Ovary (tissue), 10 donors: ENCODE measurements at regions of chr12 and their contacts with region 1.

Region 1: GRCh38 chr12:131928711-131929580 is at the start of gene PUS1:
- DNase-seq: peak; percentile 93 to 96 (median 94)
- H3K4me3 ChIP-seq: peak within 1 kb of the TSS; percentile 77
- H3K27ac ChIP-seq: peak within 1 kb of the TSS in 1 of 2 donors; percentile 74
- H3K4me1 ChIP-seq: peaks cover 7% of the 10 kb centered on the region
- H3K27me3 ChIP-seq: no peaks in the 10 kb centered on the region
- CTCF ChIP-seq: no peak
- EP300 ChIP-seq: no peak
- POLR2A ChIP-seq: no peak
- total RNA-seq, gene PUS1: 11.4 to 34.7 (median 19.3) TPM

Region 2: GRCh38 chr12:131896080-131896810 is 32.7 kb before region 1 on chr12:
- intact Hi-C with region 1: loop called in 1 of 4 experiments (anchors 2 kb)
- DNase-seq: peak; percentile 93 to 96 (median 94)
- H3K4me3 ChIP-seq: peak overlapping the region; percentile 60
- H3K27ac ChIP-seq: peak overlapping the region; percentile 98
- H3K4me1 ChIP-seq: peaks cover 7% of the 10 kb centered on the region
- H3K27me3 ChIP-seq: no peaks in the 10 kb centered on the region
- CTCF ChIP-seq: peak in 1 of 3 donors; percentile 29
- EP300 ChIP-seq: peak; percentile 90
- POLR2A ChIP-seq: peak; percentile 96